OCI-LY7 (cell line): ENCODE measurements at regions of chr17 and their contacts with region 1.

Region 1: DNA sequence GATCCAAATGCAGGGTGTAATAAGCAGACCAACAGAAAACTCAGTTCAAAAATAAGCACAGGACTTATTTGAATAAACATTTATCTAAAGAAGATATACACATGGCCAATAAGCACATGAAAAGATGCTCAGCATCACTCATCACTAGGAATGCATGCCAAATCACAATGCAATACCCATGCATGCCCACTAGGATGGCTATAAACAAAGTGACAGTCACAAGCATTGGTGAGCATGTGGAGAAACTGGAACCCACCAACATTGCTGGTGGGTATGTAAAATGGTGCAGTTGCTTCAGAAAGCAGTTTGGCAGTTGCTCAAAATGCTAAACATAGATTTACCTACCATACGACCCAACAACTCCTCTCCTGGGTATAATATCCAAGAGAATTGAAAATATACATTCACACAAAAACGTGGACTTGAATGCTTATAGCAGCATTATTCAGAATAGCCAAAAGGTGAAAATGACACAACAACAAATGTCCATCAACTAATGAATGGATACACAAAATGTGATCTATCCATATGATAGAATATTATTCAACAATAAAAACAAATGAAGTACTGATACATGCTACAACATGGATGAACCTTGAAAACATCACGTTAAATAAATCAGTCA is 20.1 kb downstream of the UBE2O start:
- DNase-seq: peak; percentile 71
- H3K4me3 ChIP-seq: peak overlapping the region; percentile 26
- H3K27ac ChIP-seq: peak overlapping the region; percentile 92
- H3K4me1 ChIP-seq: peaks cover 83% of the 10 kb centered on the region
- CTCF ChIP-seq: peak; percentile 83

Region 2: GRCh38 chr17:76345377-76345974 is 87.3 kb before region 1 on chr17:
- CTCF ChIA-PET with region 1: no interaction called
- POLR2A ChIA-PET with region 1: no interaction called
- intact Hi-C with region 1: no loop called
- DNase-seq: no peak
- H3K4me3 ChIP-seq: no peak overlapping the region
- H3K27ac ChIP-seq: no peak overlapping the region
- H3K4me1 ChIP-seq: no peaks in the 10 kb centered on the region
- CTCF ChIP-seq: no peak

Region 3: GRCh38 chr17:76444518-76445311 is 11.9 kb after region 1 on chr17:
- CTCF ChIA-PET with region 1: interaction called, 3 read pairs
- POLR2A ChIA-PET with region 1: interaction called, 12 read pairs
- intact Hi-C with region 1: no loop called
- DNase-seq: no peak
- H3K4me3 ChIP-seq: peak overlapping the region; percentile 56
- H3K27ac ChIP-seq: peak overlapping the region; percentile 34
- H3K4me1 ChIP-seq: peaks cover 96% of the 10 kb centered on the region
- CTCF ChIP-seq: no peak

Region 4: GRCh38 chr17:76452660-76453430 is 20.0 kb after region 1 on chr17 and contains the start of gene UBE2O:
- CTCF ChIA-PET with region 1: interaction called, 7 read pairs
- POLR2A ChIA-PET with region 1: interaction called, 7 read pairs
- intact Hi-C with region 1: loop called (anchors 2 kb)
- DNase-seq: peak; percentile 96
- H3K4me3 ChIP-seq: peak within 1 kb of the TSS; percentile 89
- H3K27ac ChIP-seq: peak within 1 kb of the TSS; percentile 20
- H3K4me1 ChIP-seq: peaks cover 38% of the 10 kb centered on the region
- CTCF ChIP-seq: peak; percentile 79
- total RNA-seq, gene UBE2O: 43.4 and 55.1 TPM in 2 replicates